ENCODE measurements at regions of chr17 and their contacts with region 1.

Region 1: GRCh38 chr17:31787857-31788570 is 71.0 kb downstream of the COPRS start:
- DNase-seq: peak; percentile 39
- H3K4me3 ChIP-seq: no peak overlapping the region
- H3K27ac ChIP-seq: peak overlapping the region; percentile 11 to 62 (median 52)
- H3K4me1 ChIP-seq: no peaks in the 10 kb centered on the region
- H3K27me3 ChIP-seq: no peaks in the 10 kb centered on the region
- CTCF ChIP-seq: no peak
- EP300 ChIP-seq: no peak
- POLR2A ChIP-seq: no peak

Region 2: GRCh38 chr17:31581022-31581490 is 207.0 kb before region 1 on chr17:
- in situ Hi-C with region 1: no loop called
- intact Hi-C with region 1: loop called (anchors 1 kb)
- DNase-seq: peak; percentile 59
- H3K4me3 ChIP-seq: no peak overlapping the region
- H3K27ac ChIP-seq: peak overlapping the region; percentile 66 to 85 (median 76)
- H3K4me1 ChIP-seq: peaks cover 17 to 30% (median 20%) of the 10 kb centered on the region in 4 donors
- H3K27me3 ChIP-seq: no peaks in the 10 kb centered on the region
- CTCF ChIP-seq: no peak
- EP300 ChIP-seq: no peak
- POLR2A ChIP-seq: no peak